ENCODE measurements at regions of chr16 and their contacts with region 1.

Region 1: DNA sequence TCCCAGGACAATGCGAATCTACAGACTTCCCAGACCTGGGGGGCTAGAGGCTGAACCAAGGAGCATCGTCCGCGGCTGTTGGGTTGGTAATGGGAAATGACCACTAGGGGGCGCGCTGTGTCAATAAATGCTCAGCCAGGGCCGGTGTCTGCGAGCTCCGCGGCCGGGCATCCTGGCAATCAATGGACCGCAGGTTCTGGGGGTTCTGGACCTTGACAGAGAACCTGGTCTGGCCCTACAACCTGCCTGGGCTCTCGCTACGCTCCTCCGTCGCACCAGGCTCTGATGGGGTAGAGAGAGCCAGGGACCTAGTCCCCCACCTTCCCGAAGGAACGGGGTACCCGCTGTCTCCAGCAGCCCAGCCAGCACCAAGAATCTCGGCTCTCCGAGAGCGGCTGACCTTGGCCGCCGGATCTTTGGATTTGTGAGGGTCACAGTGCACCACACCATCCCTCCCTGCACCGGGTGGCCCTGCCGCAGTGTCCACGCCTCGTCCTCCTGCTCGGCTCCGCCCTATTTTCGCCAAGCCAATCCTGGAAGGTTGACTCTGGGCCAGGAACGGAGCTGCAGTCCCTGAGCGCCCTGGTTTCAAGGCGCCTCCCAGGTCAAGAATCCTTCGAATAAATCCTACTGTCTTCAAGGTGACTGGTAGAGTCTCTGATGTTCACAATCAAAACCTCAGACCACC is 20.4 kb upstream of the BEAN1 start:
- DNase-seq: peak; percentile 90
- H3K4me3 ChIP-seq: peak overlapping the region; percentile 26 to 53 (median 46)
- H3K27ac ChIP-seq: peak overlapping the region in 1 of 4 donors; percentile 27
- H3K4me1 ChIP-seq: peaks cover 0 to 8% (median 7%) of the 10 kb centered on the region in 4 donors
- H3K27me3 ChIP-seq: peaks cover 0 to 22% (median 3%) of the 10 kb centered on the region in 3 donors
- CTCF ChIP-seq: peak; percentile 66 to 92 (median 80)
- EP300 ChIP-seq: no peak
- POLR2A ChIP-seq: no peak

Region 2: DNA sequence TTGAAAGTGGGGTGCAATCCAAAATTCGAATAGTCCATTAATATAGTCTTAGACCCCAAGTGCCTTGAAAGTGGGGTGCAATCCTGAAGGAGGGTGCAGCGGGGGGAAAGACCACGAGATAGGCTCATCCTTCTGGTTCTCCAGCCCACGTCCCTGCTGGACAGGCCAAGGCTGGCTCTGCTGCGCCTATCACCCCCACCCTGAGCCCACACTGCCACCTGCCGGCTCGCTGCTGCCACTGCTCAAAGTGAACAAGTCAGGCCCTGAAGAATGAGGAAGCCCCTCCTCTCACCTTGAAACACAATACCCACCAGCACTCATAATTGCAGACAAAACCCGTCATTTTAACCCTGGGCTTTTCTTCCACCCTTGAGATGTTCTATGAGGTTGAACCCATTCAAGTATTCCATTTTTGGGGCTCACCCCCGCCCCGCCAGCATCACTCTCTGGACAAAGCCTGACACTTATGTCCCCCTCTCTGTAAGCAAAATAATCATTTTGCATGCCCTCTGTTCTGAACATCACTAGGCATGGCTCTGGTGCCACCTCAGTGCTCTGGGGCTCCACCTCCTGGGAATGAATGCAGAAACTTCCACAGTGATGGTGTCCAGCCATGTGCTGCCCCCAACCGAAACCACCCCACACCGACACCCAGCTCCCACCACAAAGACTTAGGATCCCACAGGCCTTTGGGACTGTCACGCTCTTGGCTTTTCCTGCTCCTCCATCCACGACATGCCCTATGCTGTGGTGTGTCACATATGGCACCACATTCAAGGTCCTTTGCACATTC is 77.2 kb after region 1 on chr16:
- intact Hi-C with region 1: loop called (anchors 1 kb)
- DNase-seq: peak; percentile 80
- H3K4me3 ChIP-seq: no peak overlapping the region
- H3K27ac ChIP-seq: no peak overlapping the region
- H3K4me1 ChIP-seq: peaks cover 0 to 14% (median 12%) of the 10 kb centered on the region in 4 donors
- H3K27me3 ChIP-seq: no peaks in the 10 kb centered on the region
- CTCF ChIP-seq: peak; percentile 65 to 90 (median 85)
- EP300 ChIP-seq: no peak
- POLR2A ChIP-seq: no peak

Region 3: DNA sequence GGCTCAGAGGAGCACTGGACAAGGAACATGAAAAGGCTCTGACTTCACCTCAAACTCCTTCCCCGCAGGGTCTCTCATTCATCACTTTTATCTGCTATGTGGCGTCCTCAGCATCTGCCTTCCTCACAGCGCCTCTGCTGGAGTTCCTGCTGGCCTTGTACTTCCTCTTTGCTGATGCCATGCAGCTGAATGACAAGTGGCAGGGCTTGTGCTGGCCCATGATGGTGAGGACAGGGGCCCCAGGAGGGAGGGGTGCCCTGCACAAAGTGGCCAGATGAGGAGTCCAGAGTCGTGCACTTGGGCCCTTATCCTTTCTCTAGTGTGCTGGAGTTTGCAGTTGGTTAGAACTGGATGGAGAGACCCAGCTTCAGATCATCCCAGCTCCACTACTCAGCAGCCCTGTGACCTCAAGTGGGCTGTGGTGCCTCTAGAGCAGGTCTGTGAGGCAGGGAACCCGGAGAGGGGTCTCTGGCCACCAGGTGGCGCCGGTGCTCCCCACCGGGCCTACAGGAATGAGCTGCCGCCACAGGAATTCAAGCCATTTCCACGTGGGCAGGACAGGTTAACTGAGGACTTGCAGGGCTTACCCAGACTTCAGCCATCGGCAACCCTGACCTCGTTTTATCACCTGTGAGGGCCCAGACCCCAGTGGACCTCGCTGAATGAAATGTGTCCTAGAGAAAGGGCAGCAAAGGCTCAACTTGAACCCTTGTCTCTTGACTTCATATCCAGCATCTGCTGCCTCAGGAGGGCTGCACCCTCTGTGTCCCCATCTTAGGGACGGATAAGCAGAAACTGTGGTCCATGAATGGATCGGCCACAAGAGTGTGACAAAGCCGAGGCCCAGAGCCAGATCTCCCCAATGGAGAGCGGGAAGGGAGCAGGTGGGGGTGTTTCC is 201.8 kb after region 1 on chr16:
- intact Hi-C with region 1: loop called (anchors 2 kb)
- DNase-seq: peak; percentile 91
- H3K4me3 ChIP-seq: no peak overlapping the region
- H3K27ac ChIP-seq: peak overlapping the region; percentile 1 to 48 (median 32)
- H3K4me1 ChIP-seq: peaks cover 0 to 33% (median 29%) of the 10 kb centered on the region in 4 donors
- H3K27me3 ChIP-seq: peaks cover 0 to 21% (median 13%) of the 10 kb centered on the region in 3 donors
- CTCF ChIP-seq: peak; percentile 58 to 84 (median 70)
- EP300 ChIP-seq: no peak
- POLR2A ChIP-seq: no peak

Measured in sigmoid colon (tissue), 7 donors.